Mammary epithelial cell (primary cell): ENCODE measurements at regions of chr11 and their contacts with region 1.

Region 1: GRCh38 chr11:129895126-129896041 is at the start of gene NFRKB:
- DNase-seq: peak; percentile 76
- H3K4me3 ChIP-seq: peak within 1 kb of the TSS; percentile 70 to 95 (median 90)
- H3K27ac ChIP-seq: peak within 1 kb of the TSS; percentile 45
- H3K4me1 ChIP-seq: peaks cover 15% of the 10 kb centered on the region
- H3K27me3 ChIP-seq: no peaks in the 10 kb centered on the region
- CTCF ChIP-seq: no peak
- total RNA-seq, gene NFRKB: 27.3 to 33.6 TPM

Region 2: GRCh38 chr11:129930296-129930695 is 34.9 kb after region 1 on chr11:
- CTCF ChIA-PET with region 1: no interaction called
- dilution Hi-C with region 1: loop called (anchors 5 kb)
- in situ Hi-C with region 1: no loop called
- intact Hi-C with region 1: no loop called
- DNase-seq: peak; percentile 76
- H3K4me3 ChIP-seq: no peak overlapping the region
- H3K27ac ChIP-seq: no peak overlapping the region
- H3K4me1 ChIP-seq: peaks cover 27% of the 10 kb centered on the region
- H3K27me3 ChIP-seq: no peaks in the 10 kb centered on the region
- CTCF ChIP-seq: no peak

Region 3: DNA sequence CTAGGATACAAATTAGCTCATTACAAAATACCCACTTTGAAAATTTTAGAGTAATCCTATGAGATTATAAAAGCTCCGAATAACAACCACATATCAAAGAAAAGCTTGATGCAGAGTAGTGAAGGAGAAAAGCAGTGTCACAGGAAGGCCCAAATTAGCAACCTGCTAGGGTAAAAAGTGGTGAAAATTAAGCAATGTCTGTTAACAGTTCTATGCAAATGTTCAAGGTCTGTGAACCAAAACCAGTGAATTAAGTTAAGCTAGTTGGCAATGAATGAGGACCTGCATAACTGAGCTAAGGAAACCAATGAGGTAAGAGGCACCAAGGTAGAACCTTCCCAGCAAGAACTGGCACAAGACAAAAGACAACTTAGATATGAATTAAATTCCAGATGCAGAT is 77.7 kb after region 1 on chr11:
- CTCF ChIA-PET with region 1: no interaction called
- dilution Hi-C with region 1: no loop called
- in situ Hi-C with region 1: no loop called
- intact Hi-C with region 1: no loop called
- DNase-seq: no peak
- H3K4me3 ChIP-seq: no peak overlapping the region
- H3K27ac ChIP-seq: no peak overlapping the region
- H3K4me1 ChIP-seq: no peaks in the 10 kb centered on the region
- H3K27me3 ChIP-seq: no peaks in the 10 kb centered on the region
- CTCF ChIP-seq: no peak